Caco-2 (cell line): ENCODE measurements at regions of chr6 and their contacts with region 1.

Region 1: DNA sequence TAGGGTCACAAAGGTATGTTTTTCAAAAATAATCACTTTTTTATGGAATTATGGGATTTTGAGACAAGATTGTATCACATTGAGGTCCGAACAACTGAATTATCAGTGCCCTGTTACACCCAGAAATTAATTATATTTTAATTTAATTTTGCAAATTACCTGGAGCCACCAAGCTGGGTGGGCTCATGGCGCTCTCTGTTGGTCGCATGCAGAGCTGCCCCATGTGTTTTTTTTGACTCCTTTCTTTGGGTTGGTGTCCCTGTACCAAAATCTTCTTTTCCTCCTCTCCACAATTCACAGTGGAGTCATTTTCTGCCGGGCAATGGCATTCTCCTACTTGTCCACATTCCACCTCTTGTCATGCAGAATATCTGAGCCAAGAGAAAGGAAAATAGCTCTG is 38.9 kb upstream of the FRMD1 start:
- DNase-seq: no peak
- H3K4me3 ChIP-seq: no peak overlapping the region
- H3K4me3 Mint-ChIP-seq: no peak overlapping the region
- H3K27ac Mint-ChIP-seq: no peak overlapping the region
- H3K4me1 ChIP-seq: no peaks in the 10 kb centered on the region; the same call in 1 of the 2 replicates
- H3K4me1 Mint-ChIP-seq: no peaks in the 10 kb centered on the region
- H3K27me3 ChIP-seq: no peaks in the 10 kb centered on the region
- H3K27me3 Mint-ChIP-seq: no peaks in the 10 kb centered on the region
- CTCF ChIP-seq: peak in 1 of 2 experiments; percentile 35

Region 2: GRCh38 chr6:168060521-168060931 is 57.4 kb before region 1 on chr6:
- CTCF ChIA-PET with region 1: interaction called, 8 read pairs
- POLR2A ChIA-PET with region 1: no interaction called
- intact Hi-C with region 1: loop called (anchors 5 kb)
- DNase-seq: peak; percentile 64 to 75
- H3K4me3 ChIP-seq: no peak overlapping the region
- H3K4me3 Mint-ChIP-seq: no peak overlapping the region
- H3K27ac Mint-ChIP-seq: peak overlapping the region; percentile 17
- H3K4me1 ChIP-seq: peaks cover 21% of the 10 kb centered on the region; the same call in 1 of the 2 replicates
- H3K4me1 Mint-ChIP-seq: peaks cover 9% of the 10 kb centered on the region
- H3K27me3 ChIP-seq: no peaks in the 10 kb centered on the region
- H3K27me3 Mint-ChIP-seq: no peaks in the 10 kb centered on the region
- CTCF ChIP-seq: peak; percentile 61 to 85